T-cell (primary cell): ENCODE measurements at regions of chr17 and their contacts with region 1.

Region 1: GRCh38 chr17:30323895-30324319 is 9.9 kb downstream of the TMIGD1 start:
- DNase-seq: peak in 32 of 35 experiments; percentile 6 to 54 (median 25)
- ATAC-seq: peak; percentile 58 to 69 (median 64)
- H3K4me3 ChIP-seq: peak overlapping the region in 1 of 2 donors; percentile 11
- H3K4me3 Mint-ChIP-seq: peak overlapping the region; percentile 40 to 60 (median 42)
- H3K27ac ChIP-seq: peak overlapping the region; percentile 80
- H3K27ac Mint-ChIP-seq: peak overlapping the region; percentile 87 to 88
- H3K4me1 ChIP-seq: peaks cover 15 to 21% of the 10 kb centered on the region in 2 experiments
- H3K4me1 Mint-ChIP-seq: peaks cover 22 to 56% (median 28%) of the 10 kb centered on the region in 3 donors
- H3K27me3 ChIP-seq: no peaks in the 10 kb centered on the region
- H3K27me3 Mint-ChIP-seq: no peaks in the 10 kb centered on the region

Region 2: DNA sequence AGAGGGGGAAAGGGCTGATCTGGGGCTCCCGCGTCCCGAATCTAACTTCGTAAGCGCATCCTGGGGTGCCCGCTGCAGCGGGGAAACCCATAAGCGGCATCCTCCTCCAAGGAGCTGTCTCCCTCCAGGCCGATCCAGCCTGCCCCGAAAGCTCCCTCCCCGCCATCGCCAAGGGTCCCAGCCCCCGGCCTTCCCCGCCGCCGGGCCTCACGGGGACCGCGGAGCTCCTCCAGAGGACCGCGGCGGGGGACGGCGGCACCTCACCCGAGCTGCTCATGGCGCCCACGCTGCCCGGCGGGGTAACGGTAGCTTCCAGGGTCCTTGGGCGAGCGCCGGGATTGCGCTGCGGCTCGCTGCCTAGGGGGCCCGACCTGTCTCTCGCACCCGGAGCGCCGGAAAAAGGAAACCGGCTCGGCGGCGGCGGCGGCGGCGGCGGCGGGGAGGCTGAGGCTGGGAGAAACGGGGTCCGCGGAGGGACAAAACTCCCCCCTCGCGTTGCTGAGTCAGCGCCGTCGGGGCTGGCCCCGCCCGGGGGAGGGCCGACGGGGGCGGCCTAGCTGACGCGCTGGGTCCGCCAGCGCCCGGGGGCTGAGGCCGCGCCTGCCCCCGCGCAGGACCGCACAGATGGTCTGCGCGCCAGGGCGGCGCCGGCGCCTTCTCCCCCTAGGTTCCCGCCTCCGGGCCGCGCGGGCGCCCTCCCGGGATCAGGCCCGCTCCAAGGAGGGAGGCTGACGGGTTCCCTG is 32.2 kb before region 1 on chr17 and contains the start of gene BLMH:
- CTCF ChIA-PET with region 1: interaction called in 1 of 2 experiments, 11 read pairs
- POLR2A ChIA-PET with region 1: interaction called in 1 of 2 experiments, 5 read pairs
- DNase-seq: peak; percentile 42 to 85 (median 63)
- ATAC-seq: peak; percentile 87 to 89 (median 88)
- H3K4me3 ChIP-seq: peak within 1 kb of the TSS; percentile 84 to 85
- H3K4me3 Mint-ChIP-seq: peak within 1 kb of the TSS in 2 of 3 donors; percentile 94 to 95
- H3K27ac ChIP-seq: peak within 1 kb of the TSS; percentile 58
- H3K27ac Mint-ChIP-seq: peak within 1 kb of the TSS; percentile 66 to 85
- H3K4me1 ChIP-seq: peaks cover 10 to 11% of the 10 kb centered on the region in 2 experiments
- H3K4me1 Mint-ChIP-seq: peaks cover 14 to 25% (median 24%) of the 10 kb centered on the region in 3 donors
- H3K27me3 ChIP-seq: no peaks in the 10 kb centered on the region
- H3K27me3 Mint-ChIP-seq: no peaks in the 10 kb centered on the region
- total RNA-seq, gene BLMH: 38.8 to 60.2 (median 47.4) TPM